PC-9 (cell line): ENCODE measurements at regions of chr12 and their contacts with region 1.

Region 1: GRCh38 chr12:770479-770878 is 18.1 kb downstream of the WNK1 start:
- DNase-seq: no peak
- H3K4me3 ChIP-seq: no peak overlapping the region
- H3K27ac ChIP-seq: no peak overlapping the region
- H3K4me1 ChIP-seq: no peaks in the 10 kb centered on the region
- H3K27me3 ChIP-seq: no peaks in the 10 kb centered on the region
- CTCF ChIP-seq: no peak

Region 2: GRCh38 chr12:530308-530707 is 240.2 kb before region 1 on chr12:
- CTCF ChIA-PET with region 1: no interaction called
- POLR2A ChIA-PET with region 1: interaction called, 17 read pairs
- intact Hi-C with region 1: no loop called
- DNase-seq: peak in 1 of 2 experiments; percentile 33
- H3K4me3 ChIP-seq: no peak overlapping the region
- H3K27ac ChIP-seq: no peak overlapping the region
- H3K4me1 ChIP-seq: no peaks in the 10 kb centered on the region
- H3K27me3 ChIP-seq: no peaks in the 10 kb centered on the region
- CTCF ChIP-seq: no peak